Activated naive CD8-positive, alpha-beta T cell treated with anti-CD3 and anti-CD28 coated beads, Interleukin-2, amount 10 ng/mL, durations not matched to agents 7 days and 5 days (primary cell): ENCODE measurements at regions of chr10 and their contacts with region 1.

Region 1: DNA sequence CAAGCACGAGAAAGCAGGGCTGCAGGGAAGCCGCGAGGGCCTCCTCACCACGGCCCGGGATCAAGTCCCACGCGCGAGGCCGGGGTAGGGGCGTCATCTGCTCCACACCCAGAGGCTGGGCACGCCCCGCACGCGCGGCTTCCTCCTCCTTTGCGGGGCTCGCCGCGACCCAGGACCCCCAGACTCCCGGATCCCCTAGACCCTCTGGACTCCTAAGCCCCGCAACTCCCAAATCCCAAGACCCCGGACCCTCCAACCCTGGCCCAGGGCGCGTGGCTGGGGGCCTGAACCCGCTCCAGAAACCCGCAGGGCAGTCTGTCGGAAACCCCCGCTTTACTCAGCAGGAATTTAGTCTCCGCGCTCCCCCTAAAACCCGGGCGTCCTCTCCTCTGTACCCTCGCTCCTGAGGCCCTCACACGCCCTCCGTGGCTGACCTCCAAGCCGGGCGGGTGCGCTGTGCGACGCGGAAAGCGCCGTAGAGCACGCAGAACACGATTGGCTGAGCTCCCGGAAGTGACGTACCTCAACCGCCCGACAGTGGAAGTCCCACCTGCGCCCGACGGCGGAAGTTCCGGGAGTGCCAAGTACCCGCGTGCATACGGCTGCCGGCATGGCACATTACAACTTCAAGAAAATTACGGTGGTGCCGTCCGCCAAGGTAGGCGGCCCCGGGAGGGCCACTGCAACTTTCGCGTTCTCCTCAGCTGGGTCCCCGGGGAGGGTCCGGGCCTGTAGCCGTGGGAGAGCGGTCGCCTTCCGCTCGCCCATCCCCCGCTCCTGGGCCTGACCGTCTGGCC is at the start of gene GTPBP4:
- DNase-seq: peak; percentile 91
- ATAC-seq: peak; percentile 98
- H3K4me3 Mint-ChIP-seq: peak within 1 kb of the TSS; percentile 96
- H3K27ac Mint-ChIP-seq: peak within 1 kb of the TSS; percentile 95
- H3K4me1 Mint-ChIP-seq: peaks cover 24% of the 10 kb centered on the region
- H3K27me3 Mint-ChIP-seq: no peaks in the 10 kb centered on the region
- total RNA-seq, gene GTPBP4: 58.6 to 61.1 TPM

Region 2: GRCh38 chr10:931416-932318 is 56.4 kb before region 1 on chr10 and contains the start of gene LARP4B:
- POLR2A ChIA-PET with region 1: interaction called, 23 read pairs
- DNase-seq: peak; percentile 98
- ATAC-seq: peak; percentile 99
- H3K4me3 Mint-ChIP-seq: peak within 1 kb of the TSS; percentile 98
- H3K27ac Mint-ChIP-seq: peak within 1 kb of the TSS; percentile 98
- H3K4me1 Mint-ChIP-seq: peaks cover 24% of the 10 kb centered on the region
- H3K27me3 Mint-ChIP-seq: no peaks in the 10 kb centered on the region
- total RNA-seq, gene LARP4B: 98.1 to 99.8 TPM

Region 3: DNA sequence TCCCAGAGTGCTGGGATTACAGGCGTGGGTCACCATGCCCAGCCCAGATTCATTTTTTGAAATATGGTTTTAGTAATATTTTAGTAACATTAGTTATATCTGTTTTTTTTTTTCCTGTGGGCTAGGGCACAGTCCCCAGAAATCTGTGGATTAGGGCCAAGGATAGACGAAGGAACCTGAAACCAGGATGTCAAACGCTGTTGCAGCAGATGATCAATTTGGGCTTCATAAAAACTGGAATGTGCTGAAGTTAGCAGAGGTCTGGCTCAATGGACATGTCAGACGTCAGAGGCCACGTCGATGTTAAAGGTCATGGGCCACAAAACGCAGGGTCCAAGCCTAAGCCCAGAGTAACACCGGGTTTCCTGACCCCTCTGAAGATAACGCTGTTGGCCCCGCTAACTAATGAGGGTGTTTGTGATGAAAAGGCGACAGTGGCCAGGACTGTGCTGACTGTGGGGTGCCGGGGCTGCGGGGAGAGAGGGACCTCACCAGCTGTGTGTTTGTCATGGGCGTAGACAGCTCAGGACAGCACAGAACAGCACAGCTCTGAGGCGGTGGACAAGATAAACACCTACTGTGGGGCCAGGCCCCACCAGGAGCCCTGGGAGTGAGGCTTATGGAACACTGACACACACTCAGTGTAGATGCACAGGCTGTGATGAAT is 23.6 kb before region 1 on chr10:
- POLR2A ChIA-PET with region 1: no interaction called
- DNase-seq: no peak
- ATAC-seq: no peak
- H3K4me3 Mint-ChIP-seq: no peak overlapping the region
- H3K27ac Mint-ChIP-seq: no peak overlapping the region
- H3K4me1 Mint-ChIP-seq: peaks cover 6% of the 10 kb centered on the region
- H3K27me3 Mint-ChIP-seq: peaks cover 19% of the 10 kb centered on the region

Region 4: DNA sequence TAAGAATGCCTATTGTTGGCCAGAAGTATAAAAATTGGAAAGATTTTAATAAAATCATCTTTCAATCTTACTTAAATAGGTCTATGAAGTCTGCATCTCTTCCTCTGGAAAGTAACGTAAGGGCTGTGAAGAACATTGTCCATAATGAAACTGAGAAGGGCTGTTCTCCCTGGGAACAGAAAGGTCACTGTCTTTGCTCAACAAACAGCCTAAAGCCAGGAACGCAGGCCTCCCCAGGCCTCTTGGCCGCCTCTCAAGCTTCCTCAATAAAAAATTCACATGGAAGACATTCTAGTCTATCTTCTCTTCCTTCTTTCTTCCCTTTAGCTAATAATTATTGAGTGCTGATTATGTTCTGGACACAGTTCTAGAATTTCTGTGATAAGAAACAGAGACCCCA is 46.7 kb after region 1 on chr10:
- POLR2A ChIA-PET with region 1: no interaction called
- DNase-seq: no peak
- ATAC-seq: no peak
- H3K4me3 Mint-ChIP-seq: no peak overlapping the region
- H3K27ac Mint-ChIP-seq: no peak overlapping the region
- H3K4me1 Mint-ChIP-seq: peaks cover 1% of the 10 kb centered on the region
- H3K27me3 Mint-ChIP-seq: no peaks in the 10 kb centered on the region

Region 5: DNA sequence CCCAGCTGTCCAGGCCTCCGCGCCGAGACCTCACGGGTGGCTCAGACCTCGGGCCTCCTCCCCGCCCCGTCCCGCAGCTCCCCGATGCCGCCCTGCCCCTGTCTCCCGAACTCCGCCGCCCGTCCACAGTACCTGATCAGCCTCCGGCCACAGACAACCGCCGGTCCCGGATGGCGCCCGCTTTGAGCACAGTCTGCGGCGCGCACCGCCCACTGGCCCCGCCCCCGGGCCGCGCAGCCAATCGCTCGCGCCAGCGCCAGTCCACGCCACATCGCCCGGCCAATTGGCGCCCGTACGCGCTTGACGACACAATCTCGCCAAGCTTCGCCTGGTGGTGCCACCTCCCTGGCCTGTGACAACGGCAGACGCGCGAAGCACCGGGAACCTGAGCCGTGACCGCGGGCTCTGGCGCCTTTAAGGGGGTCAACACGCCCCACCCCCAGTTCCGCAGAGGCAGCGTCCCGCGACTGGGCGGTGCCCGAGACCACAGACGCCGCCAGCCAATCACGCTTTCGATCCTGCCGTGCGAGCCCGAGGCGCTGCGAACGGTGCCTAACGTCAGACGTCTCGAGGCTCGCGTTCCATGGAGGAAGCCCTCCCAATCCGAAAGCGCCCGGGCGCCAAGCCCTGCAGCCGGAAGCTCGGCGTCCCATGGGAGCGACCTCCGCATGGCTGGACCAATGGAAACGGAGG is 60.8 kb after region 1 on chr10 and contains the start of gene IDI1:
- POLR2A ChIA-PET with region 1: interaction called, 12 read pairs
- DNase-seq: peak; percentile 98
- ATAC-seq: peak; percentile 88
- H3K4me3 Mint-ChIP-seq: peak within 1 kb of the TSS; percentile 95
- H3K27ac Mint-ChIP-seq: peak within 1 kb of the TSS; percentile 97
- H3K4me1 Mint-ChIP-seq: peaks cover 53% of the 10 kb centered on the region
- H3K27me3 Mint-ChIP-seq: no peaks in the 10 kb centered on the region
- total RNA-seq, gene IDI1: 53.8 to 57.6 TPM